PC-9 (cell line): ENCODE measurements at regions of chr7 and their contacts with region 1.

Region 1: DNA sequence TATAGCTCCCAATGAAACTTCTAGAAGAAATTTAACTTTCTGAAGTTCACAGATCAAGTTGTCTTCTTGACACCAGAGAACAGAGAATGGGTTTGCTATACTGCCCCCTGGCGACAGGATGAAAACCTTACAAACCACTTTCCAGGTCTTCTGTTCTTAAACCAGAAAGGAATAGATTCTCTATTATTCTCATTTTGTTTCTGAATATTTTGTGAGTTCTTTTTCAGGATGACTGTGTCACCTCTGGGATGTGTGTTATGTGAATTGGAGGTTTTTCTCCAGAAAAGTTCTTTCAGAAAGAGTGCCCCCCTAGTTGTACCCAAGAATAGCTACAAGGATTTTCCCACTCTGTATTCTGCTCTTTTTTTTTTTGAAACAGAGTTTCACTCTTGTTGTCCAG is 6.3 kb downstream of the IFT22 start:
- DNase-seq: peak in 1 of 2 experiments; percentile 21
- H3K4me3 ChIP-seq: no peak overlapping the region
- H3K27ac ChIP-seq: no peak overlapping the region
- H3K4me1 ChIP-seq: no peaks in the 10 kb centered on the region
- H3K27me3 ChIP-seq: no peaks in the 10 kb centered on the region
- CTCF ChIP-seq: peak; percentile 78

Region 2: DNA sequence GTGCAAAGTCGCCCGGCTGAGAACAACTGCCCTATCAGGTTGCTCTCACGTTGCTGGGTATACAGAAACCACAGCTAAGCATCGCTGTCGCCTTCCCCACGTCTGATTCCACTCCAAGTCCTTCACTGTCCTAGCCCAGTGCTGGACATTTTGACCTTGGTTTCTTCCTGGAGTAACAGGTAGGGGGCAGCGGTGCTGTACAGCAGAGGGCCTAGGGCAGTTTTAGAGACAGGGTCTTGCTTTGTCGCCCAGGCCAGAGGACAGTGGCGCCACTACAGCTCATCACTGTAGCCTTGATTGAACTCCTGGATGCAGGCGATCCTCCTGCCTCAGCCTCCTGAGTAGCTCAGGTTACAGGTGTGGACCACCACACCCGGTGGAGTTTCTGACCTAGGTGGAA is 80.3 kb before region 1 on chr7:
- CTCF ChIA-PET with region 1: no interaction called
- POLR2A ChIA-PET with region 1: no interaction called
- intact Hi-C with region 1: no loop called
- DNase-seq: no peak
- H3K4me3 ChIP-seq: no peak overlapping the region
- H3K27ac ChIP-seq: no peak overlapping the region
- H3K4me1 ChIP-seq: peaks cover 5% of the 10 kb centered on the region
- H3K27me3 ChIP-seq: no peaks in the 10 kb centered on the region
- CTCF ChIP-seq: peak; percentile 25; the same call in 1 of the 2 replicates

Region 3: GRCh38 chr7:101288439-101288838 is 26.9 kb before region 1 on chr7:
- CTCF ChIA-PET with region 1: no interaction called
- POLR2A ChIA-PET with region 1: no interaction called
- intact Hi-C with region 1: no loop called
- DNase-seq: no peak
- H3K4me3 ChIP-seq: no peak overlapping the region
- H3K27ac ChIP-seq: no peak overlapping the region
- H3K4me1 ChIP-seq: no peaks in the 10 kb centered on the region
- H3K27me3 ChIP-seq: peaks cover 23% of the 10 kb centered on the region
- CTCF ChIP-seq: no peak

Region 4: GRCh38 chr7:101299511-101300464 is 15.5 kb before region 1 on chr7:
- CTCF ChIA-PET with region 1: no interaction called
- POLR2A ChIA-PET with region 1: interaction called, 10 read pairs
- intact Hi-C with region 1: no loop called
- DNase-seq: no peak
- H3K4me3 ChIP-seq: no peak overlapping the region
- H3K27ac ChIP-seq: no peak overlapping the region
- H3K4me1 ChIP-seq: no peaks in the 10 kb centered on the region
- H3K27me3 ChIP-seq: peaks cover 16% of the 10 kb centered on the region
- CTCF ChIP-seq: no peak

Region 5: DNA sequence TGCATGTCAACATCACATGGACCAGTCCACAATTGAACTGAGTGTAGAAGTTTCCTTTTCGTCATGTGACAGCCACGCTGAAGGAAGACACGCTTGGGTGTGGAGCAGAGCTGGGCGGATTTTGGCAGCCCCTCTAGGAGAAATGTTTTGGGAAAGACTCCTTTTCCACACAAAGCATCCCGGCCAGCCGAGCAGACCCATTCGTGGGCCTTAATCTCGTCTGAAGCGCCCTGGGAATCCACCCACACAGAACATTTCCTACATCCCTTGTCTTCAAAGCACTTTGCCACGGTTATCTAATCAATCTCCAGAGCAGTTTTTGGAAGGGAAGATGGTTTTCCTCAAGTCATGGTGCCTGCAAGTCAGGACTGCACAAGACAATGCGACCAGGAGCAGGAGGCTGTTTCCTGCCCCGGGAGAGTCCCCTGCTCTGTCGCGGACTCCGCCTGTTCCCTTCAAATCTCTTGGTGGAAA is 14.7 kb after region 1 on chr7:
- CTCF ChIA-PET with region 1: no interaction called
- POLR2A ChIA-PET with region 1: no interaction called
- intact Hi-C with region 1: no loop called
- DNase-seq: no peak
- H3K4me3 ChIP-seq: no peak overlapping the region
- H3K27ac ChIP-seq: no peak overlapping the region
- H3K4me1 ChIP-seq: no peaks in the 10 kb centered on the region
- H3K27me3 ChIP-seq: peaks cover 19% of the 10 kb centered on the region; the same call in 1 of the 2 replicates
- CTCF ChIP-seq: no peak